ENCODE measurements at regions of chr20 and their contacts with region 1.

Region 1: DNA sequence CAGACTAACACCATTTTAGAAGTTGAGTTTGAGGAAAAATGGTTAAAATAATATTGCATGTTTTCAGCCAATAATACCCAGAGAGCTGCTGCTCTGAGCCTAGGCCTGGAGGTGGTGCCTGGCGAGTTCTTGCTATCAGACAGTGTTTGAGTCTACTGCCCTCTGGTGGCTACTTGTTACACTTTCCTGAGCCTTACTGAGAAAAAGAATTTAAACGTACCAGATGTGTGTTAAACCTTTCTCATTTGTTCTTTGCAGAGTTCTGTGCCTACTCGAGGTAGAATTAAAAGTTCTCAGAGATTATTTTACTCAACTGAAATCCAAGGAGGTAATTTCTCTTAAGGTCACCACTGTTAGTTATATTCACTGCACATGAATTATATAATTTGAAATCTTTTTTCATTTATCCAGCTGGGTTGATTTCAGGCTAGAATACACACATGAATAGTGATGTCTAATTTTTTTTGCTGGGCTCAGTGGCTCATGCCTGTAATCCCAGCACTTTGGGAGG is 38.2 kb downstream of the SHLD1 start:
- DNase-seq: peak; percentile 79

Region 2: GRCh38 chr20:5529331-5530148 is 258.9 kb before region 1 on chr20:
- CTCF ChIA-PET with region 1: interaction called, 29 read pairs
- POLR2A ChIA-PET with region 1: no interaction called
- DNase-seq: peak; percentile 78

Region 3: DNA sequence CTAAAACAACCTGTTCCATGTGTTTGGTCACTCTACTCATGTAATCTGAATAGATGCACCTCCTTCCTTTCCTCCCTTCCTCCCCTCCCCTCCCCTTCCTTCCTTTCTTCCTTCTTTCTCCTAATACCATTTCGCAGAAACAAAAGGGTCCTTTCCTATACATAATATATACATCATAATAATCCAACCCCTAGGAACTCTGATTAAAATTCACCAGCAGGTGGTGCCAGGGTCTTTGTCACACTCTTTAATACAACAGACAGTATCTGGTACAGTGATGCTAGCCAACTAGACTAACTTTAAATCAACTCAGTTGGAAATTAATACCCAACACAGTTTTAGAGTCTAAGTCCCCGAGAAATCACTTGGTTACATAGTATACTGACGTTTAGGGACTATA is 219.4 kb before region 1 on chr20:
- CTCF ChIA-PET with region 1: interaction called, 15 read pairs
- POLR2A ChIA-PET with region 1: interaction called, 4 read pairs
- DNase-seq: peak; percentile 20

Region 4: DNA sequence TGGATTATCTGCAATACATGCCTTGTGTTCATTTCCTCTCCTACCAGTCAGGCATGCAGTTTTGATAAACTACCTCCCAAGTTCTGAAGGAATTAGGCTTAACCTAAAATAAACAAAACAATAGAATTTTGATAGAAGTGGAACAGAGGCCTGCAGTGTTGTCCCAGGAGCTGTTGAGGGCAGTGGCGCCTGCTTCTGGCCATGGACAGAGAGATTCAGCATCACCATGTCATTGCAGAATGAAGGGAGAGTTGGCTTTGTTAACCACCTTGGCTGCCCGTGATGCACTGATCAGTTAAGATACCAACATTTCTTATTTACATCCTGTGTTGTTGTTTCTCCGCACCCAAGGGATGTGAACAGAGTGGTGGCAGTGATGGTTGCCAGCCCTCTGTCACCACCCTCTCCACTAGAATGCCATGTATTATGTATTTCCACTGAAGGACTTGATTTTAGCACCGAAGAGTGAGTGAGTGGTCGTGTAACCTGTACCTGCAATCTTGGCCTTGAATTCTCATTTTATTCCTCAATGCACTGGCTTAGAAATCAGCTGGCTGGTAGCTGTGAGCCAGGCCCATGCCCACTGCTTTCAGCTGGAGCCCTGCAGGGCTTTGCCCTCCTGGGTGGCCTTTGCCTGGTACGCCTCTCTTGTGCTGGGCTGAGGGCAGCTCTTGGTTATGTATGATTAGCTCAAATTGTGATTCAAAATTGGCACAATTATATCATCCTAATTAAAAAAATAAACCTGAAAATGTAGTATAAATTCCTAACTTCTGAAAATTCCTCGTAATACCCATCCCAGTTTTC is 18.2 kb after region 1 on chr20:
- CTCF ChIA-PET with region 1: no interaction called
- POLR2A ChIA-PET with region 1: no interaction called
- DNase-seq: no peak

Region 5: GRCh38 chr20:5863040-5863833 is 74.8 kb after region 1 on chr20:
- CTCF ChIA-PET with region 1: no interaction called
- POLR2A ChIA-PET with region 1: no interaction called
- DNase-seq: no peak

Measured in HEK293T (cell line).